MCF 10A (cell line): ENCODE measurements at regions of chr7 and their contacts with region 1.

Region 1: GRCh38 chr7:36291387-36292316 is 98.0 kb upstream of the ANLN start:
- DNase-seq: peak; percentile 80
- H3K4me3 Mint-ChIP-seq: peak overlapping the region; percentile 23
- H3K27ac Mint-ChIP-seq: peak overlapping the region; percentile 81
- H3K4me1 Mint-ChIP-seq: peaks cover 31% of the 10 kb centered on the region
- H3K27me3 Mint-ChIP-seq: peaks cover 20% of the 10 kb centered on the region
- CTCF ChIP-seq: peak; percentile 91

Region 2: DNA sequence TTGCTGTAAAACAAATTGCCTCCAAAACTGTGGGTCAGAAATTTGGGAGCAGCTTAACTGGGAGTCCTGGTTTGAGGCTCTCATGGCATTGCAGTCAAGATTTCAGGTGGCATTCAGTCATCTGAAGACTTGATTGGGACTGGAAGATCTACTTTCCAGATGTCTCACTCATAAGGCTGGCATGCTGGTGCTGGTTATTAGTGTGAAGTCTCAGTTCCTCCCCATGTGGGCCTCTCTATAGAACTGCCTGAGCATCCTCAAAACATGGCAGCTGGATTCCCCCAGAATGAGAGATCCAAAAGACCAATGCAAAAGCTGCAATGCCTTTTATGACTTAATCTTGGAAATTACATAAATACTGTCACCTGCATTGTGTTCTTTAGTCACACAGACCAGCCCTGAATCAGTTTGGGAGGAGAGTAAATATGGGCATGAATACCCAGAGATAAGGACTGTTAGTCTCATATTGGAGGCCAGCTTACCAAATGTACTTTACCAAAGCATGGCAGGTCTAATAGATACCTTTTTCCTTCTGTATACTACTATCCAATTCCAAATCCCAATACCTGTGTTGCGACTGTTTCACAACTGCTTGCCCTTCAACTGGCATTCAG is 590.3 kb before region 1 on chr7:
- CTCF ChIA-PET with region 1: no interaction called
- POLR2A ChIA-PET with region 1: no interaction called
- intact Hi-C with region 1: loop called (anchors 10 kb)
- DNase-seq: no peak
- H3K4me3 Mint-ChIP-seq: no peak overlapping the region
- H3K27ac Mint-ChIP-seq: no peak overlapping the region
- H3K4me1 Mint-ChIP-seq: peaks cover 9% of the 10 kb centered on the region
- H3K27me3 Mint-ChIP-seq: no peaks in the 10 kb centered on the region
- CTCF ChIP-seq: no peak

Region 3: GRCh38 chr7:36021367-36021766 is 270.3 kb before region 1 on chr7:
- CTCF ChIA-PET with region 1: interaction called, 4 read pairs
- POLR2A ChIA-PET with region 1: no interaction called
- intact Hi-C with region 1: loop called (anchors 1 kb)
- DNase-seq: peak; percentile 39
- H3K4me3 Mint-ChIP-seq: no peak overlapping the region
- H3K27ac Mint-ChIP-seq: no peak overlapping the region
- H3K4me1 Mint-ChIP-seq: peaks cover 8% of the 10 kb centered on the region
- H3K27me3 Mint-ChIP-seq: no peaks in the 10 kb centered on the region
- CTCF ChIP-seq: peak; percentile 54

Region 4: GRCh38 chr7:36202398-36202797 is 89.3 kb before region 1 on chr7:
- CTCF ChIA-PET with region 1: no interaction called
- POLR2A ChIA-PET with region 1: no interaction called
- intact Hi-C with region 1: no loop called
- DNase-seq: no peak
- H3K4me3 Mint-ChIP-seq: no peak overlapping the region
- H3K27ac Mint-ChIP-seq: no peak overlapping the region
- H3K4me1 Mint-ChIP-seq: no peaks in the 10 kb centered on the region
- H3K27me3 Mint-ChIP-seq: no peaks in the 10 kb centered on the region
- CTCF ChIP-seq: no peak

Region 5: DNA sequence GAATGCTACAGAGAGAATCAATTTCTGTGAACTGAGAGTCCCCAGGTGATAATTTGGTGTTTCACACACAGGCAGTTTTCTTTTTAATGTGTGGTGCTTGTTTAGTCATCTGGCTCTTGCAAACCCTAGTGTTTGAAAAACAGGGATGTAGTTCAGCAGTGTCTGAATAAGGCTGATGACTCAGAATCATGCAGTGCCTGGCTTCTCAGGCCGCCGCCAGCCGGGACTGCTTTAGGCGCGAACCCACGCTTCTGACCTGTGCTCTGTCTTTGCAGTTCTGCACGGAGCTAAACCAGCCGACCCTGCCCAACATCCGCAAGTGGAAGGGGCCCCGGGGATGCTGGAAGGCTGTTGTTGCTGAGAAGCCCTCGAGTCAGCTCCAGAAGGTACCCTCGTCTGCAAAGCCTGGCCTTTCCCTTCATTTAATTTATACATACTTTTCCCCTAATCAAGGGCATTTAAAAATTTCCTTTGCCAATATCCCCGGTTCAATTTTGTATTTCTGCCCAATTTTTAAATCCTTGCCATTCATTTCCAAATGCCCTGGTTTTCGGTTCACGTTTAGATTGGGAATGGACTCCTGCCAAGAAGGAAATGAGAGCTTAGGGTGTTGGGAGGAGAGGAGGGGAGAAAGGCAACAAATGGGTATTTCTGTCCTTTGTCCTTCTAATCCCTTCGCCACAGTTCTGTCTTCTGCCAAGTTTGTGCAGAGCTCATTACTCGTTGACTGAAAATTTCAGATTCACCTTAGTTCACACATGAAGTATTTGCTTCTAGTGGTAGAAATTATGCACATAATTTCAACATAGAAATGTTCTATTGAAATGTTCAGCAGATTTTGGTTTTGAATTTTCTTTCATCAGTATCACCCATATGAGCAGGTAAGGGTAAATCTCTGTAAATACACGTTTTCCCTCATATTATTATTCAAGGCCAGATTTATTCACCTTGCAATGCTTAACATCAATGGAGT is 10.5 kb before region 1 on chr7:
- CTCF ChIA-PET with region 1: interaction called, 22 read pairs
- POLR2A ChIA-PET with region 1: interaction called, 4 read pairs
- intact Hi-C with region 1: no loop called
- DNase-seq: peak; percentile 83
- H3K4me3 Mint-ChIP-seq: no peak overlapping the region
- H3K27ac Mint-ChIP-seq: peak overlapping the region; percentile 28
- H3K4me1 Mint-ChIP-seq: peaks cover 21% of the 10 kb centered on the region
- H3K27me3 Mint-ChIP-seq: no peaks in the 10 kb centered on the region
- CTCF ChIP-seq: no peak

Region 6: DNA sequence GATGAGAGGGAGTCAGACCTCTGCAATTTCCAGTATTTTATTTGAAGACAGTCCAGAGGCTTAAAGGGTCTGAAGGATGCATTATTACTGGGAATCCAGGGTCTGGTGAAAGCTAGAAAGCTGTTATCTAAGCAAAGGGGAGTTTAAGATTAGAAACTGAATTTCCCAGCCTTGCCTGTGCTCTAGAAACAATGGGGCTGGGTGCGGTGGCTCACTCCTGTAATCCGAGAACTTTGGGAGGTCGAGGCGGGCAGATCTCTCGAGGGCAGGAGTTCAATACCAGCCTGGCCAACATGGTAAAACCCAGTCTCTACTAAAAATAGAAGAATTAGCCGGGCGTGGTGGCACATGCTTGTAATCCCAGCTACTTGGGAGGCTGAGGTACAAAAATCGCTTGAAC is 26.5 kb after region 1 on chr7:
- CTCF ChIA-PET with region 1: interaction called, 45 read pairs
- POLR2A ChIA-PET with region 1: interaction called, 3 read pairs
- intact Hi-C with region 1: no loop called
- DNase-seq: no peak
- H3K4me3 Mint-ChIP-seq: no peak overlapping the region
- H3K27ac Mint-ChIP-seq: no peak overlapping the region
- H3K4me1 Mint-ChIP-seq: peaks cover 5% of the 10 kb centered on the region
- H3K27me3 Mint-ChIP-seq: no peaks in the 10 kb centered on the region
- CTCF ChIP-seq: no peak